HepG2 (cell line): ENCODE measurements at regions of chr1 and their contacts with region 1.

Region 1: GRCh38 chr1:941588-942383 is 17.3 kb downstream of the NOC2L start:
- DNase-seq: peak; percentile 34
- ATAC-seq: peak; percentile 37
- H3K4me3 ChIP-seq: peak overlapping the region; percentile 16 to 65 (median 36); a peak in 4 of 6 replicates
- H3K27ac ChIP-seq: no peak overlapping the region
- H3K4me1 ChIP-seq: peaks cover 32% of the 10 kb centered on the region
- H3K27me3 ChIP-seq: peaks cover 17 to 40% of the 10 kb centered on the region in 2 experiments
- CTCF ChIP-seq: no peak
- EP300 ChIP-seq: no peak
- POLR2A ChIP-seq: no peak
- RAD21 ChIP-seq: 0 out of 2 replicates have a peak, but pooled peaks have one; percentile 12

Region 2: GRCh38 chr1:904310-904950 is 37.4 kb before region 1 on chr1:
- CTCF ChIA-PET with region 1: interaction called, 6 read pairs
- POLR2A ChIA-PET with region 1: interaction called, 4 read pairs
- in situ Hi-C with region 1: no loop called
- intact Hi-C with region 1: loop called (anchors 2 kb)
- DNase-seq: no peak
- ATAC-seq: peak; percentile 66
- H3K4me3 ChIP-seq: peak overlapping the region; percentile 12 to 59 (median 47); a peak in 4 of 6 replicates
- H3K27ac ChIP-seq: no peak overlapping the region
- H3K4me1 ChIP-seq: peaks cover 23% of the 10 kb centered on the region
- H3K27me3 ChIP-seq: peaks cover 25 to 77% of the 10 kb centered on the region in 2 experiments; a peak in 4 of 5 replicates
- CTCF ChIP-seq: peak; percentile 85
- EP300 ChIP-seq: no peak
- POLR2A ChIP-seq: no peak
- RAD21 ChIP-seq: peak; percentile 93

Region 3: GRCh38 chr1:958823-959729 is 17.3 kb after region 1 on chr1 and contains the start of gene NOC2L:
- CTCF ChIA-PET with region 1: interaction called, 3 read pairs
- POLR2A ChIA-PET with region 1: interaction called, 10 read pairs
- in situ Hi-C with region 1: no loop called
- intact Hi-C with region 1: loop called (anchors 2 kb)
- DNase-seq: peak; percentile 72
- ATAC-seq: peak; percentile 85
- H3K4me3 ChIP-seq: peak within 1 kb of the TSS; percentile 83 to 100 (median 99)
- H3K27ac ChIP-seq: peak within 1 kb of the TSS; percentile 74
- H3K4me1 ChIP-seq: peaks cover 17% of the 10 kb centered on the region
- H3K27me3 ChIP-seq: peaks cover 0 to 4% of the 10 kb centered on the region in 2 experiments; a peak in 1 of 5 replicates
- CTCF ChIP-seq: peak; percentile 21; the same call in 1 of the 2 replicates
- EP300 ChIP-seq: no peak
- POLR2A ChIP-seq: peak in 1 of 2 experiments; percentile 40; a peak in 1 of 4 replicates
- RAD21 ChIP-seq: no peak
- total RNA-seq, gene NOC2L: 91.6 and 103 TPM in 2 replicates

Region 4: DNA sequence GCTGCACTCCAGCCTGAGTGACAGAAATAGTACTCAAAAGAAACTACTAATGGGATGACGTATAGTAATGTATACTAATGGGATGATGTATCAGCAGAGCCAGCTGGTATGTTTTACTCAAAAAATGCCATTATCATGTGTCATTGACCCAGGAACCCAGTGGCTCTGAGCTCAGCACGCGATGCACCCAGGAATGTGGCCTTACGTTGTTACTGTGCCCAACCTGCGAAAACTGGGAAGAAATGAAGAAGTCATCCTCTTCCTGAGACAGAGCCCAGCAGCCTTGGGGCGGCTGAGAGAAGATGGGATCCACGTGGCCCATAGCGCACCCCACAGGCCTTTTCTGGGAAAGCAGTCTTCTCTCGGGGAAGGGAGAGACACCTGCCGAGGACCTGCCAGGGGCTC is 323.1 kb after region 1 on chr1:
- CTCF ChIA-PET with region 1: no interaction called
- POLR2A ChIA-PET with region 1: no interaction called
- in situ Hi-C with region 1: no loop called
- intact Hi-C with region 1: no loop called
- DNase-seq: no peak
- ATAC-seq: peak; percentile 19; the same call in 2 of the 3 replicates
- H3K4me3 ChIP-seq: no peak overlapping the region
- H3K27ac ChIP-seq: no peak overlapping the region
- H3K4me1 ChIP-seq: no peaks in the 10 kb centered on the region
- H3K27me3 ChIP-seq: no peaks in the 10 kb centered on the region
- CTCF ChIP-seq: peak; percentile 30; the same call in 1 of the 2 replicates
- EP300 ChIP-seq: no peak
- POLR2A ChIP-seq: no peak
- RAD21 ChIP-seq: no peak